ENCODE measurements at regions of chr19 and their contacts with region 1.

Region 1: DNA sequence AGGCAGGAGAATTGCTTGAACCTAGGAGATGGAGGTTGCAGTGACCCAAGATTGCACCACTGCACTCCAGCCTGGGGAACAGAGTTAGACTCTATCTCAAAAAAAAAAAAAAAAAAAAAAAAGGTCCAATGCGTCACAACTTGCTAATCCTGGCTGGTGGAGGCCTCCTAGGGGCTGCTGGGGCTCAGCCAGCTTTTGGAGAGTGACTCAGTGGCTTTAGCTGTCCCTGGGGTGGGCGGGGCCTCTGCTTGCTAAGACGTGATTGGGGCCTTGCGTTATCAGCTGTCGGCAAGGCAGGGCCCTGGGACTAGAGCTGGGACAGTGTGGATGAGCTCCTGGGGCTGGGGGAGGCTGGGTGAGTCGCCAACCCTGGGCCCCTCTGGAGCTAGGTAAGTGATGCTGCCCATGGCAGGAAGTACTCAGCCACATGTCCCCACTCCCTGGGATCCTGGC is 32.0 kb downstream of the F2RL3 start:
- DNase-seq: peak; percentile 99
- H3K4me3 Mint-ChIP-seq: peak overlapping the region; percentile 41
- H3K27ac Mint-ChIP-seq: peak overlapping the region; percentile 69
- H3K4me1 Mint-ChIP-seq: peaks cover 9% of the 10 kb centered on the region
- H3K27me3 Mint-ChIP-seq: no peaks in the 10 kb centered on the region
- CTCF ChIP-seq: no peak

Region 2: GRCh38 chr19:16886231-16886880 is 34.4 kb before region 1 on chr19:
- CTCF ChIA-PET with region 1: no interaction called
- POLR2A ChIA-PET with region 1: interaction called, 11 read pairs
- intact Hi-C with region 1: no loop called
- DNase-seq: peak; percentile 91
- H3K4me3 Mint-ChIP-seq: peak overlapping the region; percentile 68
- H3K27ac Mint-ChIP-seq: peak overlapping the region; percentile 95
- H3K4me1 Mint-ChIP-seq: peaks cover 6% of the 10 kb centered on the region
- H3K27me3 Mint-ChIP-seq: no peaks in the 10 kb centered on the region
- CTCF ChIP-seq: no peak

Measured in MCF 10A (cell line).